Mammary epithelial cell (primary cell): ENCODE measurements at regions of chr16 and their contacts with region 1.

Region 1: GRCh38 chr16:17705847-17706246 is 235.1 kb upstream of the XYLT1 start:
- DNase-seq: no peak
- H3K4me3 ChIP-seq: no peak overlapping the region
- H3K27ac ChIP-seq: no peak overlapping the region
- H3K4me1 ChIP-seq: no peaks in the 10 kb centered on the region
- H3K27me3 ChIP-seq: no peaks in the 10 kb centered on the region
- CTCF ChIP-seq: no peak

Region 2: DNA sequence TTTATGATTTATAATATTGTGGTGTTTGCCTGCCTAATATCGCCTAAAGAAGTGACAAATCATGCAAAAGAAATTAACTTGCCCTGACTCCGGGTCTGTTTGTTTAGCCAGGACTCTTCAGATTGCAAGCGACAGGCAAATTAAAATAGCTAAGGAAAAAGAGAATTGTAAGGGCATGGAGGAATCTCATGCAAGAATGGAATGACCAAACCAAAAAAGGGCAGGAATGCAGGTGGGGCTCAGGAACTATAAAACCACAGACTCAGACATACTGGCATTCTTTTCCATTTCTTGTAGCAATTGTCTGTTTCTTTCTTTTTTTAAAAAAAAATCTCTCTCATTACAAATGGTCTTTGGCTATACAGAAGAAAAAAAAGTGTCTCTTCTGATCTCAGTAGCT is 47.0 kb before region 1 on chr16:
- CTCF ChIA-PET with region 1: no interaction called
- dilution Hi-C with region 1: loop called (anchors 5 kb)
- in situ Hi-C with region 1: no loop called
- intact Hi-C with region 1: no loop called
- DNase-seq: no peak
- H3K4me3 ChIP-seq: no peak overlapping the region
- H3K27ac ChIP-seq: no peak overlapping the region
- H3K4me1 ChIP-seq: peaks cover 4% of the 10 kb centered on the region
- H3K27me3 ChIP-seq: no peaks in the 10 kb centered on the region
- CTCF ChIP-seq: no peak

Region 3: GRCh38 chr16:17724242-17724898 is 18.5 kb after region 1 on chr16:
- CTCF ChIA-PET with region 1: no interaction called
- dilution Hi-C with region 1: no loop called
- in situ Hi-C with region 1: no loop called
- intact Hi-C with region 1: no loop called
- DNase-seq: peak; percentile 6
- H3K4me3 ChIP-seq: no peak overlapping the region
- H3K27ac ChIP-seq: no peak overlapping the region
- H3K4me1 ChIP-seq: no peaks in the 10 kb centered on the region
- H3K27me3 ChIP-seq: no peaks in the 10 kb centered on the region
- CTCF ChIP-seq: no peak

Region 4: GRCh38 chr16:18060351-18060750 is 354.5 kb after region 1 on chr16:
- CTCF ChIA-PET with region 1: no interaction called
- dilution Hi-C with region 1: no loop called
- in situ Hi-C with region 1: no loop called
- intact Hi-C with region 1: no loop called
- DNase-seq: no peak
- H3K4me3 ChIP-seq: no peak overlapping the region
- H3K27ac ChIP-seq: no peak overlapping the region
- H3K4me1 ChIP-seq: no peaks in the 10 kb centered on the region
- H3K27me3 ChIP-seq: no peaks in the 10 kb centered on the region
- CTCF ChIP-seq: no peak